GM10248 (cell line): ENCODE measurements at regions of chr4 and their contacts with region 1.

Region 1: GRCh38 chr4:123776254-123776653 is 379.7 kb downstream of the SPRY1 start:
- DNase-seq: peak; percentile 29
- CTCF ChIP-seq: no peak

Region 2: DNA sequence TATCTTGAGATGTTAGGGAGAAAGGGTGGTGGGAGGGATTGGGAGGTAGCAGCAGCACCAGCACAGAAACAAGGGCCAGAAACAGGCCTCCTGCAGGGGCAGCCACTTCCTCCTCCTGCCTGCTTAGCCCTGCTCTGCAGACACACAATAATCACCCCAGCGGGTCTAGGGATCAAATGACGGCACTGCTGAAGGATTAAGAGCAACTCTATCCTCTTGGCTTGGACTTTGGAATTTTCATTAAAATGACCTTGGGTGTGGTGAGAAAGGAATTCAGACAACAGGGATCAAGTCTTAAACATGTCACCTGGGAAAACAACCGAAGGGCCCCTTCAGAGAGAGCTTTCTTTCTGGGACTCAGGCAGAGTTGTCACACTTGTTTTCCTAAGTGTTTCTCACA is 26.2 kb before region 1 on chr4:
- CTCF ChIA-PET with region 1: interaction called, 15 read pairs
- POLR2A ChIA-PET with region 1: no interaction called
- DNase-seq: no peak
- CTCF ChIP-seq: no peak

Region 3: GRCh38 chr4:123755655-123756054 is 20.6 kb before region 1 on chr4:
- CTCF ChIA-PET with region 1: interaction called, 15 read pairs
- POLR2A ChIA-PET with region 1: no interaction called
- DNase-seq: no peak
- CTCF ChIP-seq: no peak

Region 4: GRCh38 chr4:123786920-123787319 is 10.7 kb after region 1 on chr4:
- CTCF ChIA-PET with region 1: interaction called, 12 read pairs
- POLR2A ChIA-PET with region 1: no interaction called
- DNase-seq: no peak
- CTCF ChIP-seq: no peak

Region 5: DNA sequence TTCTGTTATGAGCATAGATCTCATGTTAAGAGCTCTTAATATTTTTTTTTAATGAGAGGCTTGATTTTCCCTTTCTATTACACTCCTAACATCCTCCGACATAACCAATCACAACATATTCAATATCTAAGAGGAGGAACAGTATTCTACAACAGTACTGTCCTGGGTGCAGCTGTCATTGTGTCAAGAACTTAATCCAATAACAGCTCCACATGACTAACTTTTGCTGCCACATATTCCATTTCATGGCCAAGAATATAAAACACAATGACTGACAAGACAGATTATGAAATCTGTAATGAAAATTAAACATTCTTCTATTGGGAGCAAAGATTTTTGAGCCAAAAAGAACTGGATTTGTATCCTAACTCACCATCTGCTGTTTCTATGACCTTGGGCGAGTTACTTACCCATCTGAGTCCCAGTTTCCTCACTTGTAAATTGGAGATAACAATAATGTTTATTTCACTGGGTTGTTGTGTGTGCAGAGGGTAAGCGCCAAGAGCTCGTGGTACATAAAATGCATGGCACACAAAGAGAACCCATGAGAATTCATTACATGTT is 25.9 kb after region 1 on chr4:
- CTCF ChIA-PET with region 1: interaction called, 11 read pairs
- POLR2A ChIA-PET with region 1: no interaction called
- DNase-seq: no peak
- CTCF ChIP-seq: no peak

Region 6: GRCh38 chr4:124000233-124000632 is 224.0 kb after region 1 on chr4:
- CTCF ChIA-PET with region 1: no interaction called
- POLR2A ChIA-PET with region 1: no interaction called
- DNase-seq: no peak
- CTCF ChIP-seq: no peak

Region 7: DNA sequence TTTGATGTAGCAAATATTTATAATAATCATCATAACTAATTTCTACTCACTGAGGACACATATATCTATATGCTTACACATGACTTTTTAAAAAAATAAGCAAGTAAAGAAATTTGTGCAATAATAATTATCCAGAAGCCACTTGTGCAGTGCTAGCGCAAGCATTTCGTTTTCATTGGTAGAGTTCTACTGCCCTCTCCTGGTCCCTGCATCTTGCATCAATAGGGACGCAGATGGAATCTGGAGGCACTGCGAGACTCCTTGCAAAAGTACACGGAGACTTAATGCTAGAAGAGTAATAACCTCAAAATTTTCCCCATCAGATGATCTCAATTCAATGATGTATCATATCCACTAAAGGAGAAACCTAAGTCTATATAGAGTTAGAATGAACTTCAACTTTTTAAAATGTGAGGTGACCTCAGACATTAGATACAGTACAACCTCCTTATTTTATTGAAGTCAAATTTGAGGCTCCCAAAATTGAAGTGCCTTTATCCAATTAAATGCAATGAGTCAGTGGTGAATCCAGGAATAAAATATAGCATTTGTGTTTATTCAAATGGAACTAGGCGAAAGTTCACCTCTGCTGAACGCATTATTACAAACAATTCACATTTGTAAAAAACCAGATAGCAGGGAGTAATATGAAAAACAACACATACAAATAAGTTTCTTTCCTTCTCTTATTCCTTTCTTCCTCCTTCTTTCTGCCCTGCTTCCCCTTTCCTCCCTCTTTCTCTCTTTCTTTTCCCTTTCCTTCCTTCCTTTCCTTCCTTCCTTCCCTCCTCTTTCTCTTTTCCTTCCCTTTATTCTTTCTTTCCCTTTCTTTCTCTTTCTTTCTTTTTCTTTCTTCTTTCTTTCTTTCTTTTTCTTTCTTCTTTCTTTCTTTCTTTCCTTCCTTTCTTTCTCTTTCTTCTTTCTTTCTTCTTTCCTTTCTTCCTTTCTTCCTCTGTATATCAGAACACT is 486.2 kb after region 1 on chr4:
- CTCF ChIA-PET with region 1: interaction called, 13 read pairs
- POLR2A ChIA-PET with region 1: no interaction called
- DNase-seq: peak; percentile 25
- CTCF ChIP-seq: peak; percentile 83

Region 8: DNA sequence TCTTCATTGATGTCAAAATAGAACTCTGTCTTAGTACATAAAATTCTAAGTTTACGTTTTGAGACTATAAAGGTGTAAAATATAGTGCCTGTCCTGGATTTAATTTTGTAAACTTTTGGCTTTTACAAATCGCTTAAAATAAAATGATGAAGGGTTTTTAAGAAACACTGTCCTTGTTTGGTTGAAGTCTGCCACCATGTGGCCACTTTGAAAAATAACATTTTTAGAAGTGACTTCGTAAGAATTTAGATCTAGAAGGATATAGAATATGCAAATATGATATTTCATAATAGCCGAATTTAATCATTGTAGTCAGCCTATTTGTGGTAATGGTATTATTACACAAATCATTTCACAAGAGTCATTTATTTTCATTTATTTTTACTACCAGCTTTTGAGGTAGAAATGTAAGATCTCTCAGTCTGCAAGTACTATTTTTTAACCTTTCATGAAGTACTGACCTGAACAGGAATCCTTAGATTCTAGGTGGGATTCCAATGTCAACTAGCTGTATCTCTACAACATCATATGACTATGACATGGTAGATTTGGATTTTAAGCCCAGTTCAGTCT is 1507.5 kb after region 1 on chr4:
- CTCF ChIA-PET with region 1: interaction called, 10 read pairs
- POLR2A ChIA-PET with region 1: no interaction called
- DNase-seq: peak; percentile 24
- CTCF ChIP-seq: peak; percentile 36